ENCODE measurements at regions of chr17 and their contacts with region 1.

Region 1: GRCh38 chr17:40399185-40399584 is 18.5 kb downstream of the TOP2A start:
- DNase-seq: peak; percentile 65
- H3K4me3 Mint-ChIP-seq: no peak overlapping the region
- H3K27ac Mint-ChIP-seq: peak overlapping the region; percentile 59
- H3K4me1 Mint-ChIP-seq: peaks cover 27% of the 10 kb centered on the region
- H3K27me3 Mint-ChIP-seq: no peaks in the 10 kb centered on the region

Region 2: DNA sequence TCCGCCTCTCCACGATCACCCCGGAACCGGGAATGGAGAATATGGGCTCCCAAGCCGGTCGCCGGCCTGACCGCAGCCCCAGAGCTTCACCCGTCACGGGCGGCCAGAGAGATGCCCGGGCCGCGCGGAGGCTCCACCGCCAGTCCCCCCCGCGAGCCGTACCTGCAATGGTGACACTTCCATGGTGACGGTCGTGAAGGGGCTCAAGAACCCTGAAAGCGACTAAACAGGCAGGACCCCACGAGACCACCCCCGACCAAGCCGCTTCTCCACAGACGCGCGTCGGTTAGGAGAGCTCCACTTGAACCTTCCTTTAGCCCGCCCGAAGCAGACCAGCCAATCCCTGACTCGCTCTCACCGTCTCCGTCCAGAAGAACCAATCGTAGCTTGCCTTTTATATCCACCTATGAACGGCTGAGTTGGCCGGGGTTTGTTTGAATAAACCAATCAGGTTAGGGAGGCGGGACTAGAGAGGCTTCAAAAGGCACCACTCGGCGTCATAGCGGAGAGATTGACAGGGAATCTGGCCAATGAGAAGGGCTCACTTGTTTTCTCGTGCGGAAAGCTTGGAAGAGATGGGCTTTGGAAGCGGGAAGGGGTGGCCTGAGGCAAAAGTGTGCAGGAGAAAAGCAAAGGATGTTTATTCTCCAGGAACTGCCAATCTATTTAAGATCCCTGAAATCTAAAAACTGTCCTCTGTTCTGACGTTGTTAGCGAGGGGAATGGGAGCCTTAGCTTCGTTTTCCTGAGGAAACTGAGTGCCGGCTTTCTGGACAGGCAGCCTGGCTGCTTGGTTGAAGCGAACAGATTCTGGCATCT is 18.6 kb after region 1 on chr17 and contains the start of gene TOP2A:
- intact Hi-C with region 1: loop called (anchors 2 kb)
- DNase-seq: peak; percentile 99
- H3K4me3 Mint-ChIP-seq: peak within 1 kb of the TSS; percentile 99
- H3K27ac Mint-ChIP-seq: peak within 1 kb of the TSS; percentile 97
- H3K4me1 Mint-ChIP-seq: peaks cover 31% of the 10 kb centered on the region
- H3K27me3 Mint-ChIP-seq: no peaks in the 10 kb centered on the region
- total RNA-seq, gene TOP2A: 189 and 194 TPM in 2 replicates

Region 3: DNA sequence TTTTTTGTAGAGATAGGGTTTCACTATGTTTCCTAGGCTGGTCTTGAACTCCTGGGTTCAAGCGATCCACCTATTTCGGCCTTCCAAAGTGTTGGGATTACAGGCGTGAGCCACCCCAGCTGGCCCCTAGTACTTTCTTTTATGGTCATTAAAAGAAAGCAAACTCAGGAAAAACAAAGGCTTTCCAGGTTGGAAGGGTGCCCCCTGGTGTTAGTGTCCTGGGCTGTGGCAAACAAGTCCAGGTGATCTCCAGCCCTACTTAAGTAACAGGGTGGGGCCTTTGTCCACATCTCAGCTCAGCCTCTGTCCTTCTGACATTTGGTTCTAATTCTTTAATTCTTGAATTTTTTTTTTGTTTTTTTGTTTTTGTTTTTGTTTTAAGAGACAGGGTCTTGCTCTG is 51.0 kb after region 1 on chr17:
- intact Hi-C with region 1: loop called (anchors 2 kb)
- DNase-seq: peak; percentile 83
- H3K4me3 Mint-ChIP-seq: no peak overlapping the region
- H3K27ac Mint-ChIP-seq: peak overlapping the region; percentile 37
- H3K4me1 Mint-ChIP-seq: peaks cover 55% of the 10 kb centered on the region
- H3K27me3 Mint-ChIP-seq: no peaks in the 10 kb centered on the region

Measured in activated CD4-positive, alpha-beta T cell treated with anti-CD3 and anti-CD28 coated beads, Interleukin-2, amount 10 ng/mL, durations not matched to agents 24 days and 14 days (primary cell).